Activated CD8-positive, alpha-beta T cell treated with anti-CD3 and anti-CD28 coated beads for 36 hours (primary cell): ENCODE measurements at regions of chr6 and their contacts with region 1.

Region 1: GRCh38 chr6:31351401-31352309 is 5.3 kb downstream of the HLA-B start:
- DNase-seq: peak; percentile 39
- ATAC-seq: peak; percentile 48
- H3K4me3 Mint-ChIP-seq: peak overlapping the region; percentile 90
- H3K27ac Mint-ChIP-seq: peak overlapping the region; percentile 62
- H3K4me1 Mint-ChIP-seq: peaks cover 45% of the 10 kb centered on the region
- H3K27me3 Mint-ChIP-seq: no peaks in the 10 kb centered on the region
- CTCF ChIP-seq: no peak

Region 2: DNA sequence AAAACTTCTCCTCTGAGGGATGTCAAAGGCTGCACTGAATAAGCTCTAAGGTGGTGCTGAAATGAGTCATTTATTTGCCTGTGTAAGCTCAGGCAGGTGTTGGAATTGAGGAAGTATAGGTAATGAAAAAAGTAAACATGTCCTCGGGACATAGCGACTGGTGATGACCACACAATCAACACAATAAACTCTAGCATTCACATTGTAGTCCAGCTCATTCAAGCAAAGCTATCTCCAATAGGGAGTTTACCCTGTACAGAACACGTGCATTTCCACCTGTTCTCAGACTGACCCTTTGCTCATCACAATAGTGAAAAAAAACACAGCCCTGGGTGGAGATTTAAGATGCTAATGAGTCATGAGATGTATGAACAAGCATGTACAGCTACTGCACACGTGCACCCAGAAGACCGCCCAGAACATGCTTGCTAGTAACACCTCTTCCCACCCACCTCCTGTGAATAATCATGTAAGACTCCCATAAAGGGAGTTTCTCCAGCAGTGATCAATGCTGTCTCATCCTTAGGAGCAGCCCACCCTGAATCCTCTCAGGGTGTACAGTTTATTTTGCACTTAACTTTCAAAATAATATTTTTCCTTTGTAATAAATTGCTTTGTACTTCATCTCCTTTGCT is 148.2 kb before region 1 on chr6:
- CTCF ChIA-PET with region 1: no interaction called
- POLR2A ChIA-PET with region 1: interaction called, 15 read pairs
- intact Hi-C with region 1: loop called (anchors 5 kb)
- DNase-seq: peak; percentile 73
- ATAC-seq: peak; percentile 74
- H3K4me3 Mint-ChIP-seq: peak overlapping the region; percentile 85
- H3K27ac Mint-ChIP-seq: peak overlapping the region; percentile 97
- H3K4me1 Mint-ChIP-seq: peaks cover 59% of the 10 kb centered on the region
- H3K27me3 Mint-ChIP-seq: no peaks in the 10 kb centered on the region
- CTCF ChIP-seq: no peak